Activated T-helper 1 cell treated with anti-CD3 and anti-CD28 coated beads, Interleukin-12 subunit alpha, Interleukin-12 subunit beta, Interleukin-2, Interleukin-4 antibody, amounts not matched to agents 30 ng/mL and 10 ng/mL and 1 ng/mL, durations not matched to agents 14 hours and 24 hours and 36 hours (primary cell): ENCODE measurements at regions of chr13 and their contacts with region 1.

Region 1: GRCh38 chr13:73625562-73626339 is 508.5 kb downstream of the KLF12 start:
- DNase-seq: peak; percentile 28
- H3K4me3 Mint-ChIP-seq: peak overlapping the region; percentile 10
- H3K27ac Mint-ChIP-seq: no peak overlapping the region
- H3K4me1 Mint-ChIP-seq: peaks cover 53% of the 10 kb centered on the region
- H3K27me3 Mint-ChIP-seq: no peaks in the 10 kb centered on the region

Region 2: DNA sequence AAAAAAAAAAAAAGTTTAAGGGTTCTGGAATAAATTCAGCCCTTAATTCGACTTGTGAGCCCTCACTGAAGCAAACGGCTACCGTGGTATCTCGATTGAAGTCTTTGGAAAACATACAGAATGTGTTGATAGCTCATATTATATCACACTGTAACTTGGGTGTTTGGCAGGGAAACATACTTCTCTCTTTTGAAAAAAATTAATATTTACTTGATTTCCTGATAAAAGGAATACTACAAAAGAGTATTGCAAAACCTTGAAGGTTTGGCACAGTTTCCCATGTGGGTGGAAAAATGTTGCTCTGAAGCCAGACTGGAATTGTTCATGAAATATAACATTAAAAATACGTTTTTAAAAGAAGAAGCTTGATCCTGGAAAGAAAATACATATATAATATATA is 425.3 kb before region 1 on chr13:
- intact Hi-C with region 1: no loop called
- DNase-seq: no peak
- H3K4me3 Mint-ChIP-seq: no peak overlapping the region
- H3K27ac Mint-ChIP-seq: no peak overlapping the region
- H3K4me1 Mint-ChIP-seq: no peaks in the 10 kb centered on the region
- H3K27me3 Mint-ChIP-seq: peaks cover 5% of the 10 kb centered on the region

Region 3: DNA sequence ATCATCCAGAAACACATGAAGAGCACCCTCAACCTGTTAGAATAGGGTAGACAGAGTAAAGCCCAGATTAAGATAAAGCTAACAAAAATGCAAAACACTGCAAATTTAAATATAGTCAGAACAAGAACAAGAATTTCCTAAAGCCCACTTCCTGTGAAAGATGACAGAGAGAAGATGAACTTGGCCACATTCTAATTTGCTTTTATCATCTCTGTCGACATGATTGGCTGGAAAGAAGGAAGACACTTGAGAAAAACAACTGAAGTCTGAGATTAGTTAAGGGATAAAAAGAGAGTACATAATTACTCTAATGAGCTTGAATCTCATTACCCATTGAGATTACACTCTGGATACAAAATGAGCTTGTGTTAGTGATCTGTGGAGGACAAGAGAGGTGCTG is 29.4 kb before region 1 on chr13:
- intact Hi-C with region 1: loop called (anchors 2 kb)
- DNase-seq: no peak
- H3K4me3 Mint-ChIP-seq: no peak overlapping the region
- H3K27ac Mint-ChIP-seq: no peak overlapping the region
- H3K4me1 Mint-ChIP-seq: peaks cover 11% of the 10 kb centered on the region
- H3K27me3 Mint-ChIP-seq: no peaks in the 10 kb centered on the region

Region 4: DNA sequence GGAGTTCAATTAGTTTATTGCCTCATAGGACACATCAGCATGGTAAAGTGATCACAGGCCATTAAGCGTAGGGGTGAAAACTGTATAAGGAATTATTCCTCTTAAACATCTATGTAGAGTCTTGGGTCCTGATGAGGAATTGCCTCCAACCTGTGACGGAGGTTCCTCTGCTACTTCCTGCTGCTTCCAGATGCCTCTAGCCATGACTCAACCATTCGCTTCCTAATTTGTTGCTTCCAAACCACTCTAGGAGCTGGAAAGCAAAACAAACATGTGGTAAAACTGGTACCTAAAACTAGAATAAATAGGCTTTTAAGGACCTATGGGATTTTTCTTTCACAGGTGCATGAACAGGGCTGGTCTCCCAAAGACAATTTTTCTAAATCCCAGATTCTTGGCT is 254.6 kb after region 1 on chr13:
- intact Hi-C with region 1: no loop called
- DNase-seq: no peak
- H3K4me3 Mint-ChIP-seq: no peak overlapping the region
- H3K27ac Mint-ChIP-seq: no peak overlapping the region
- H3K4me1 Mint-ChIP-seq: no peaks in the 10 kb centered on the region
- H3K27me3 Mint-ChIP-seq: no peaks in the 10 kb centered on the region